Natural killer cell (primary cell): ENCODE measurements at regions of chr13 and their contacts with region 1.

Region 1: DNA sequence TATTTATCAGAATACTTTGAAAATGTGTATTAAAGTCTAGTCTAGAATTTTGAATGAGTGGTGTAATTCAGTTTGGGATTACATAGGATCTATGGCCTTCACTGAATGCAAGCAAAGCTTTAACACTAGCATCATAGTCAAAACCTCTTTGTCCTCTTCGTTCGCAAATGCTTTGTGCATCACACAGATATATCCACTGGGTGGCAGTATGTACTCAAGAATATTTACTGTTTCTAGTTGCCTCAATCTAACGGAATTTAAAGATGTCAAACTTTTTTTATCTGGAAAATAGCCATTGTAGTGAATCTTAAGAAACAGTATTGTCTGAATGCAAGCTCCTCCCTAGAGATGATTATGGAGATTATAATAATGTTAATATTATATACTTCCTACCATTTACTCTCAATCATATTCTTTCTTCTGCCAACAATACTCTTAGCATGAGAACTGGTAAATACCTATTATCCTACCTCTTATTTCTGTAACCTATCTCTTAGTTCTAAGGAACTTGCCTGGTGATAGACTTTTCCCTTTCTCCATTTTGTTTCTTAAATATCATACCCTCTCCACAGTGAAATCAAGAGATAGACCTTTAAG is 25.8 kb downstream of the LACC1 start:
- DNase-seq: peak in 1 of 2 donors; percentile 76
- ATAC-seq: peak; percentile 81 to 92 (median 85)
- H3K4me3 ChIP-seq: no peak overlapping the region
- H3K4me3 Mint-ChIP-seq: no peak overlapping the region
- H3K27ac ChIP-seq: no peak overlapping the region
- H3K27ac Mint-ChIP-seq: no peak overlapping the region
- H3K4me1 ChIP-seq: no peaks in the 10 kb centered on the region
- H3K4me1 Mint-ChIP-seq: peaks cover 0 to 5% of the 10 kb centered on the region in 2 donors
- H3K27me3 ChIP-seq: no peaks in the 10 kb centered on the region
- H3K27me3 Mint-ChIP-seq: peaks cover 6 to 27% of the 10 kb centered on the region in 2 donors
- CTCF ChIP-seq: peak; percentile 81

Region 2: DNA sequence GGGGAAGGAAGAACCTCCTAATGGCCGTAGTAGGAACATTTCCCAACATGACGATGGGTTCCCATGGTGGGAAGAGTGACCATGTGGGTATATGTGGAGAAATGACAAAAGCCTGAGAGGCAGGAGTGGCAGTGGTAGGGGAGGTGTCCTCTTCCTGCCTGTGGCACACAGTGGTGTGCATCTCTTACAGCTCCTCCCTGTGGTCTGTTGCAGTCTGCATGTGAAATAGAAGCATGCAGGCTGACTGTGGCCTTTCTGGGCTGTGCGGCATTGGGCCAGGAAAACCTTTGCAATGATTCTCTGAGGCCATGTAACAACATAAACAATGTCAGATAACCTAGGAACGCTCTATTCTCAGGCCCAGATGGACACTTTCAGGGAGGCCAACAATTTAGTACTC is 58.2 kb after region 1 on chr13:
- intact Hi-C with region 1: loop called (anchors 5 kb)
- DNase-seq: peak; percentile 22 to 27
- ATAC-seq: peak; percentile 93 to 100 (median 99)
- H3K4me3 ChIP-seq: no peak overlapping the region
- H3K4me3 Mint-ChIP-seq: peak overlapping the region; percentile 43
- H3K27ac ChIP-seq: no peak overlapping the region
- H3K27ac Mint-ChIP-seq: peak overlapping the region; percentile 25 to 72
- H3K4me1 ChIP-seq: peaks cover 7% of the 10 kb centered on the region
- H3K4me1 Mint-ChIP-seq: peaks cover 26 to 30% of the 10 kb centered on the region in 2 donors
- H3K27me3 ChIP-seq: no peaks in the 10 kb centered on the region
- H3K27me3 Mint-ChIP-seq: peaks cover 0 to under 1% of the 10 kb centered on the region in 2 donors
- CTCF ChIP-seq: peak; percentile 35

Region 3: DNA sequence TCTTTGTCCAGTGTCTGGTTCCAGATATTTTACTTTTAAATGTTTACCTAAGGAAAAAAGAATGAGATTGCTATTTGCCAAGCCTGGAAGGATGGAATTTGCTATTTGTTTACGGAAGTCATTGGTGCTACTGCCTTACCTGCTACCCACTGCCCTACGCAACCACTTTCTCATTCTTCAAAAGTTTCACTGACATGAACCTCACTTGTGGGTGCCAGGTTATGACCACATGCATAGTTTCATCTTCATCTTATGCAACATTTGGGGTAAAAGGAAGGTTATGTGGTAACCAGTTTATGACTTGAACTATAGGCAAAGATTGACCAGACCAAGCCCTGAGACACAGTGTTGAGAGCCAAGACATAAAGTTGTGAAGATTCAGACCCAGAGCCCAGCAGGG is 116.6 kb after region 1 on chr13:
- intact Hi-C with region 1: no loop called
- DNase-seq: no peak
- ATAC-seq: peak; percentile 34 to 77 (median 65)
- H3K4me3 ChIP-seq: no peak overlapping the region
- H3K4me3 Mint-ChIP-seq: no peak overlapping the region
- H3K27ac ChIP-seq: no peak overlapping the region
- H3K27ac Mint-ChIP-seq: no peak overlapping the region
- H3K4me1 ChIP-seq: no peaks in the 10 kb centered on the region
- H3K4me1 Mint-ChIP-seq: peaks cover 9 to 22% of the 10 kb centered on the region in 2 donors
- H3K27me3 ChIP-seq: no peaks in the 10 kb centered on the region
- H3K27me3 Mint-ChIP-seq: peaks cover 0 to 17% of the 10 kb centered on the region in 2 donors
- CTCF ChIP-seq: no peak

Region 4: DNA sequence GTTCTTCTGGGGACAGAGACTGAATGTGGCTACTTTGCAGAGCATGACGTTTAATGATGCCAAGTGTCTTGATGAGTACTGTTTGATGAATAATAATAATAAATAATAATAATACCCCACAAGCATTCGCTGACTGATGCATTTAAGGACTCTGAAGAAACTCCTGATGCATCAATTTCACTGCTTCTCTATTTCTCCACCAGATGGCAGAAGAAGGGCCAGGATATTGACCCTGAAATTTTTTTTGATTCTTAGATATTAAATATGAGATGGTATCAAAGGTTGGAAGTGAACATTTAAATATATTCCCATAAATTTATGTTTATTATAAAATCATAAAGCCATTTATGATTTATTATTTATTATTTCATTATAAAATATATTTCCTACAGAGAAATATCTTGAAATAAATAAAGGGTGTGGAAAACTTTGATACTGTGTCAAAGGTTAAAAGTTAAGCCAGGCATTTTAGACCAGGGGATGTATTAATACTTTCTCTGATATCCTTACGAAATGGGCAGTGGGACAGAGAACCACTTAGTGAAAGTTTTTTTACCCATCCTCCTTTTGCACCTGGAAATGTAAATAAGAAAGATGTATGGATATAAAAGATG is 145.0 kb after region 1 on chr13:
- intact Hi-C with region 1: loop called (anchors 10 kb)
- DNase-seq: peak in 1 of 2 donors; percentile 65
- ATAC-seq: peak; percentile 49 to 73 (median 55)
- H3K4me3 ChIP-seq: no peak overlapping the region
- H3K4me3 Mint-ChIP-seq: no peak overlapping the region
- H3K27ac ChIP-seq: no peak overlapping the region
- H3K27ac Mint-ChIP-seq: no peak overlapping the region
- H3K4me1 ChIP-seq: no peaks in the 10 kb centered on the region
- H3K4me1 Mint-ChIP-seq: peaks cover 5% of the 10 kb centered on the region in 2 donors
- H3K27me3 ChIP-seq: no peaks in the 10 kb centered on the region
- H3K27me3 Mint-ChIP-seq: peaks cover 39 to 41% of the 10 kb centered on the region in 2 donors
- CTCF ChIP-seq: peak; percentile 83

Region 5: GRCh38 chr13:44435142-44435982 is 529.8 kb after region 1 on chr13:
- intact Hi-C with region 1: loop called (anchors 1 kb)
- DNase-seq: peak; percentile 86 to 94
- ATAC-seq: peak; percentile 87 to 95 (median 89)
- H3K4me3 ChIP-seq: peak overlapping the region; percentile 75
- H3K4me3 Mint-ChIP-seq: peak overlapping the region; percentile 92
- H3K27ac ChIP-seq: peak overlapping the region; percentile 87
- H3K27ac Mint-ChIP-seq: peak overlapping the region; percentile 86 to 94
- H3K4me1 ChIP-seq: peaks cover 21% of the 10 kb centered on the region
- H3K4me1 Mint-ChIP-seq: peaks cover 33 to 35% of the 10 kb centered on the region in 2 donors
- H3K27me3 ChIP-seq: no peaks in the 10 kb centered on the region
- H3K27me3 Mint-ChIP-seq: no peaks in the 10 kb centered on the region
- CTCF ChIP-seq: no peak

Region 6: GRCh38 chr13:44470638-44471562 is 565.4 kb after region 1 on chr13:
- intact Hi-C with region 1: loop called (anchors 1 kb)
- DNase-seq: peak in 1 of 2 donors; percentile 59
- ATAC-seq: no peak
- H3K4me3 ChIP-seq: no peak overlapping the region
- H3K4me3 Mint-ChIP-seq: no peak overlapping the region
- H3K27ac ChIP-seq: no peak overlapping the region
- H3K27ac Mint-ChIP-seq: no peak overlapping the region
- H3K4me1 ChIP-seq: no peaks in the 10 kb centered on the region
- H3K4me1 Mint-ChIP-seq: peaks cover 0 to 4% of the 10 kb centered on the region in 2 donors
- H3K27me3 ChIP-seq: no peaks in the 10 kb centered on the region
- H3K27me3 Mint-ChIP-seq: no peaks in the 10 kb centered on the region
- CTCF ChIP-seq: peak; percentile 54

Region 7: GRCh38 chr13:44969551-44970484 is 1064.3 kb after region 1 on chr13:
- intact Hi-C with region 1: loop called (anchors 5 kb)
- DNase-seq: peak in 1 of 2 donors; percentile 52
- ATAC-seq: peak in 1 of 3 donors; percentile 34
- H3K4me3 ChIP-seq: no peak overlapping the region
- H3K4me3 Mint-ChIP-seq: no peak overlapping the region
- H3K27ac ChIP-seq: no peak overlapping the region
- H3K27ac Mint-ChIP-seq: no peak overlapping the region
- H3K4me1 ChIP-seq: no peaks in the 10 kb centered on the region
- H3K4me1 Mint-ChIP-seq: no peaks in the 10 kb centered on the region
- H3K27me3 ChIP-seq: no peaks in the 10 kb centered on the region
- H3K27me3 Mint-ChIP-seq: no peaks in the 10 kb centered on the region
- CTCF ChIP-seq: peak; percentile 77

Region 8: GRCh38 chr13:45310341-45311125 is 1405.0 kb after region 1 on chr13:
- intact Hi-C with region 1: loop called (anchors 5 kb)
- DNase-seq: no peak
- ATAC-seq: no peak
- H3K4me3 ChIP-seq: peak overlapping the region; percentile 46
- H3K4me3 Mint-ChIP-seq: peak overlapping the region; percentile 87
- H3K27ac ChIP-seq: no peak overlapping the region
- H3K27ac Mint-ChIP-seq: peak overlapping the region in 1 of 2 donors; percentile 78
- H3K4me1 ChIP-seq: peaks cover 22% of the 10 kb centered on the region
- H3K4me1 Mint-ChIP-seq: peaks cover 18 to 19% of the 10 kb centered on the region in 2 donors
- H3K27me3 ChIP-seq: no peaks in the 10 kb centered on the region
- H3K27me3 Mint-ChIP-seq: peaks cover 0 to 3% of the 10 kb centered on the region in 2 donors
- CTCF ChIP-seq: no peak